Aorta (tissue), 5 donors: ENCODE measurements at regions of chr4 and their contacts with region 1.

Region 1: DNA sequence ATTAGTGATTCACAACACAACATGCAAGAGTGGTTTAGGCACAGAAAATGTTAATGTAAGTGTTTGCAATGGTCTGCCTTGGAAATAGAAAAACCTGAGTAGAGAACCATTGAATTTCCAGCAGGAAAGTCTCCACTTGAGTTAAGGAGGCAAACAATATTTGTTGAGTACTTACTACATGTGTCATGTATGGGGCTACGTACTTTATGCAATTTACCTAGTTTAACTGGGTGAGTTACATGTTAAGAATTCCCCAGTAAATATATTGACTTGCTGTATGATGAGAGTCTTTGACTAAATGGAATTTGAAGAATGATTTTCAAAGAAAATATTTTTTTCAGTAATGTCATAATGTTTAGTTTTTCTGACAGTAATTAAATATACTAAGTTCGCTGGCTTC is 7.8 kb upstream of the NPNT start:
- DNase-seq: no peak
- ATAC-seq: no peak
- H3K4me3 ChIP-seq: no peak overlapping the region
- H3K27ac ChIP-seq: no peak overlapping the region
- H3K4me1 ChIP-seq: no peaks in the 10 kb centered on the region
- H3K27me3 ChIP-seq: no peaks in the 10 kb centered on the region

Region 2: DNA sequence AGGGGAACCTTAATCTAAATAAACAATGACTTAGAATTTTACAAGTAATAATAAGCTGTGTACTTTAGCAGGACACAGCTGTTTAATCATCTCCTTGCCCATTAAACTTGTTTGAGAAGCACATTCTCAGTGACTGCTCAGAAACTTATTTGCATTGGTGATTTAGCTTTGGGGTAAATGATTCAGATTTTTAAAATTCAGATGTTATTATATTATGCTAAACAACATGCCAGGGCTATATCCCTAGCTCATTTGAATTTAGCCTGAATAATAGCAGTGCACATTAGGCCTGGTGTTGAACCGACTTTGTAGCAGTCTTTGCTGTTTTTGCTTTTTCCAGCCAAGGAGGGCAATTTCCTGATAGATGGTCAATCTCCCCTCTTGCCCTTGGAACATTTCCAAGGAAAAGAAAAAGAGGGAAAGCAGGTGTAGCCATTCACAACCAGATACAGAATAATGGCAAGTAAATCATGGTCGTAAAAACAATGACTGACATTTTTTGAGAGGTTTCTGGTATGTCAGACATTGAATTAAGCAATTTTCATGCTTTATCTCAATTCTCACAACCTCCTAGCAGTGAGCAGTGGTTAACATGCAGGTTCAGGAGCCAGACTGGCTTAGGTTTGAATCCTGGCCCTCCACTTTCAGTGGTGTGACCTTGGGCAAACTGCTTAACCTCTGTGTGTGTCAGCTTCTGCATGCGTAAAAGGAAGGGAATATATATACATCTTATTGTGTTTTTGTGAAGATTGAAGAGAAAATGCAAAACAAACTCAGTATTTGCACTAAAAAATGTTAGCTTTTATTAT is 318.2 kb before region 1 on chr4:
- intact Hi-C with region 1: no loop called
- DNase-seq: no peak
- ATAC-seq: no peak
- H3K4me3 ChIP-seq: no peak overlapping the region
- H3K27ac ChIP-seq: no peak overlapping the region
- H3K4me1 ChIP-seq: no peaks in the 10 kb centered on the region
- H3K27me3 ChIP-seq: no peaks in the 10 kb centered on the region

Region 3: DNA sequence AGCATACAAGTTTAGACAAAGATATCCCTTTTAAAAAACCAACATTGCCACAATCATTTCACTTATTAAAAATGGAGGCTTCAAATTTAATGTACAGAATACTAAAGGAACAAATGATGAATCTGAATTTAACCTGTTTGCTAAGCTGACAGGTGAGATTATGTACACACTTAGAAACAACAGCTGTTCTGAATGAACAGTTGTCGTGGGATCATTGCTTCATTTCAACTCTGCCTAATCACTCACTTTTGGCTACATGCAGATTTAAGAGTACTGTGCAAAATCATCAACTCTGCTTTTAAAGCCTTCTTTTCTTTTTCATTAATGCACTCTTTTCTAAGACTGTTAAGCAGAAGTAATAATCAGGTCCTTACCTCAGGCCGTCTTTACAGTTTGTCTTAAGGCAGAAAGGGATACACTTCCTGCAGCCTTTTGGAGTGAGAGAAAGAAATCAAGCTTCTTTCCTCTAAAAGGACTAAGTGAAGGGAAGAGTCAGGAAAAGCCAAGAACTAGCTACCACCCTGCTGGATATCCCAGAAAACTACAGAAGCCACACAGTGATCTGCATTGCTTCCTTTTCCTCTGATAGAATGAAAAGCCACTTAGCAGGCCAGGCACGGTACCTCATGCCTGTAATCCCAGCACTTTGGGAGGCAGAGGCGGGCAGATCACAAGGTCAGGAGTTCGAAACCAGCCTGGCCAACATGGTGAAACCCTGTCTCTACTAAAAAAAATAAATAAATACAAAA is 46.9 kb before region 1 on chr4:
- intact Hi-C with region 1: loop called (anchors 2 to 10 kb)
- DNase-seq: no peak
- ATAC-seq: no peak
- H3K4me3 ChIP-seq: no peak overlapping the region
- H3K27ac ChIP-seq: no peak overlapping the region
- H3K4me1 ChIP-seq: peaks cover 0 to 2% of the 10 kb centered on the region in 2 donors
- H3K27me3 ChIP-seq: no peaks in the 10 kb centered on the region

Region 4: GRCh38 chr4:105923497-105924238 is 36.2 kb after region 1 on chr4:
- intact Hi-C with region 1: no loop called
- DNase-seq: no peak
- ATAC-seq: peak; percentile 56
- H3K4me3 ChIP-seq: no peak overlapping the region
- H3K27ac ChIP-seq: peak overlapping the region in 1 of 2 donors; percentile 10
- H3K4me1 ChIP-seq: peaks cover 3 to 4% of the 10 kb centered on the region in 2 donors
- H3K27me3 ChIP-seq: no peaks in the 10 kb centered on the region